CD14-positive monocyte (primary cell): ENCODE measurements at regions of chr11 and their contacts with region 1.

Region 1: GRCh38 chr11:86174101-86175046 is 70.2 kb upstream of the EED start:
- DNase-seq: no peak
- H3K4me3 ChIP-seq: no peak overlapping the region
- H3K4me3 Mint-ChIP-seq: no peak overlapping the region
- H3K27ac ChIP-seq: no peak overlapping the region
- H3K27ac Mint-ChIP-seq: peak overlapping the region in 1 of 7 donors; percentile 70
- H3K4me1 ChIP-seq: peaks cover 60% of the 10 kb centered on the region in 2 donors
- H3K4me1 Mint-ChIP-seq: peaks cover 2% of the 10 kb centered on the region
- H3K27me3 ChIP-seq: no peaks in the 10 kb centered on the region
- H3K27me3 Mint-ChIP-seq: peaks cover 0 to 4% (median 4%) of the 10 kb centered on the region in 3 donors
- CTCF ChIP-seq: no peak

Region 2: DNA sequence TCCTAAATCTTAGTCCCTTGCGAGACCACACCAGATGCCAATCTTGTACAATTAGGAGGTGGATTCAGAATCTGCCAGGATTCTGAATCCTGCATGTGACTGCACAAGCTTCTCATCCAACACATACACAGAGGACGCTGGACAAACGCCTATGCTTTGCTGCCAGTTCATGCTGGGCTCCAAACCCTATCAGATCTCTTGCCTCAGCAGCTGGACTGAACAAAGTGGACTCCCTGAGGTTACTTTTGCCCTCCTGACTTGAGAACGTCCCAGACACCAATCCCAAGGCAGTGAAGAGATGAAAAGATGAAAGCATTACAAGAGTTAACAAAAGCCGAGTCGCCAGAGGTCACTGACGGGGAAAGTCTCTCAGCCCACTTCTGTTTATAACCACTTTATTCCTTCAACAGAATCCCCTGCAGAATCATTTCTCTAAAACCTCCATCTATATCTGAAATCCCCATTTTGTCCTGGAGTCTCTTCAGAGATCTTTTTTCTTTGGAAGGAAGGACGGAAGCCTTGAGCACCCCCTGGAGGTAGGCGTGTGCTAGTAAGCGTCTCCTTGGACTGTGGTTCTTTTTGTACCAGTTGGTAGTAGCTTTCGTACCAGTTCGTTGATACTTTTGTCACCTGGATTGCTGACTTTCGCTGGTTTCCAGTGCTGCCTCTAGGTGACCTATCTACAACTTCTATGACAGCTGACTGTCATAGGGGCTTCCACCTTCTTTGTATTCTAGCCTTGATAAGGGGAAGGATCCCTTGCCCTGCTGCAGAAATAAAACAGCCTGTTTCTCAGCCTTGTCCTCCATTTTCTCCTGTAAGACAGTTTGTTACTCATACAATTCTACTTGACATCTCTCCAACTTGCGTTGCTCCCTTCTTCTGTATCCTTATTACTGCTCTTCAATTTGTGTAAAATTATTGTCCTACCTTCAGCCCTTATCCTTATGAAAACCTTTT is 44.0 kb after region 1 on chr11:
- intact Hi-C with region 1: loop called in 1 of 2 experiments (anchors 5 kb)
- DNase-seq: peak; percentile 58 to 77 (median 76)
- H3K4me3 ChIP-seq: peak overlapping the region in 1 of 3 experiments; percentile 47
- H3K4me3 Mint-ChIP-seq: peak overlapping the region; percentile 56 to 73
- H3K27ac ChIP-seq: no peak overlapping the region
- H3K27ac Mint-ChIP-seq: peak overlapping the region in 3 of 7 donors; percentile 10 to 68 (median 51)
- H3K4me1 ChIP-seq: peaks cover 19 to 22% of the 10 kb centered on the region in 2 donors
- H3K4me1 Mint-ChIP-seq: peaks cover 28% of the 10 kb centered on the region
- H3K27me3 ChIP-seq: no peaks in the 10 kb centered on the region
- H3K27me3 Mint-ChIP-seq: peaks cover 0 to 2% (median 0%) of the 10 kb centered on the region in 3 donors
- CTCF ChIP-seq: peak; percentile 94